ENCODE measurements at regions of chr10 and their contacts with region 1.

Region 1: GRCh38 chr10:110210674-110211464 is 3.5 kb downstream of the MXI1 start:
- DNase-seq: peak; percentile 95
- ATAC-seq: peak; percentile 90
- H3K4me3 ChIP-seq: peak overlapping the region; percentile 70 to 82
- H3K27ac ChIP-seq: peak overlapping the region; percentile 58; the same call in 1 of the 2 replicates
- H3K4me1 ChIP-seq: peaks cover 4% of the 10 kb centered on the region; the same call in 1 of the 2 replicates
- H3K27me3 ChIP-seq: peaks cover 2% of the 10 kb centered on the region; the same call in 1 of the 2 replicates
- CTCF ChIP-seq: no peak; the same call in 1 of the 2 replicates

Region 2: GRCh38 chr10:110074298-110074697 is 136.6 kb before region 1 on chr10:
- CTCF ChIA-PET with region 1: no interaction called
- POLR2A ChIA-PET with region 1: interaction called, 12 read pairs
- in situ Hi-C with region 1: no loop called
- intact Hi-C with region 1: no loop called
- DNase-seq: no peak
- ATAC-seq: no peak
- H3K4me3 ChIP-seq: no peak overlapping the region
- H3K27ac ChIP-seq: no peak overlapping the region
- H3K4me1 ChIP-seq: peaks cover 7% of the 10 kb centered on the region; the same call in 1 of the 2 replicates
- H3K27me3 ChIP-seq: no peaks in the 10 kb centered on the region
- CTCF ChIP-seq: no peak

Region 3: DNA sequence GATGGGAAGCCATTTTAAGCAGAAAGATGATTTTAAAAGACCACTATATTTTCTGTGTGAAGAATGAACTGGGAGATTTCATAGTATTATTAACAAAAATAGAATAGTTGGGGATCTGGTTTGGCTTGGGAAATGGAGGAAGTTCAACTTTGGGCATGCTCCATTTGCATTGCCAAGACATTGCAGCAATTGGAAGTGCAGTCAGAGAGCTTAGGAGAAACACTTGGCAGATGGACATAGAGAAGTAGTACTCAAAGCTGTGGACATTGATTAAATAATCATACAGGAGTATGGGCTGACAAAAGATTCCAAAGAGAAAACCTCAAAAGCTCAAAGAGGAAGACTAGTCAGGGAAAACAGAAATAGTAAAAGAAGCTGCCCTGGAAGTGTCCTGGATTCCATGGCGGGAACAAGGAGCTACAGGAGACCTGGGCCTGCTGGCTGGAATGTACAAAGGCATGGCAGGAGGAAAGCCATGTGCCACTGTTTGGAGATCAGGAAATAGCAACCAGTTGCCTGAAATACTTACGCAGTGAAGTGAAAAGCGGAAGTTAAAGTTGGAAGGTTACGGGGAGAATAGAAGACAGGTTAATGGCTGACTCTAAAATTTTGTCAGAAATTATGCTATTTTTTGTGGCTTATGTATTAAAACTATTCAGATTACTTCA is 97.1 kb before region 1 on chr10:
- CTCF ChIA-PET with region 1: no interaction called
- POLR2A ChIA-PET with region 1: no interaction called
- in situ Hi-C with region 1: no loop called
- intact Hi-C with region 1: no loop called
- DNase-seq: no peak
- ATAC-seq: no peak
- H3K4me3 ChIP-seq: no peak overlapping the region
- H3K27ac ChIP-seq: no peak overlapping the region
- H3K4me1 ChIP-seq: no peaks in the 10 kb centered on the region
- H3K27me3 ChIP-seq: no peaks in the 10 kb centered on the region
- CTCF ChIP-seq: no peak

Region 4: DNA sequence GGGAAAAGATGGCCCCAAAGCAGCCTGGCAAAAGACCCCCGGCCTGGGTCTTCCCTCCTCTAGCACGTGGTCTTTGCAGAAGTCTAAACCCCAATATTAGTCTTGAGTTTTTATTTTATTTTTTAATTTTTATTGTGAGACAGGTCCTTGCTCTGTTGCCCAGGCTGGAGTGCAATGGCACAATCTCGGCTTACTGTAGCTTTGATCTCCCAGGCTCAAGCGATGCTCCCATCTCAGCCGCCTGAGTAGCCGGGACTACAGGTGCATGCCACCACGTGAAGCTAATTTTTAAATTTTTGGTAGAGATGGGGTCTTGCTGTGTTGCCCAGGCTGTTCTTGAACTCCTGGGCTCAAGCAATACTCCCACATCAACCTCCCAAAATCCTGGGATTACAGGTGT is 43.7 kb before region 1 on chr10:
- CTCF ChIA-PET with region 1: no interaction called
- POLR2A ChIA-PET with region 1: interaction called, 12 read pairs
- in situ Hi-C with region 1: no loop called
- intact Hi-C with region 1: no loop called
- DNase-seq: no peak
- ATAC-seq: no peak
- H3K4me3 ChIP-seq: no peak overlapping the region
- H3K27ac ChIP-seq: no peak overlapping the region
- H3K4me1 ChIP-seq: no peaks in the 10 kb centered on the region
- H3K27me3 ChIP-seq: peaks cover 21% of the 10 kb centered on the region
- CTCF ChIP-seq: no peak

Region 5: GRCh38 chr10:110241407-110241806 is 30.5 kb after region 1 on chr10:
- CTCF ChIA-PET with region 1: no interaction called
- POLR2A ChIA-PET with region 1: no interaction called
- in situ Hi-C with region 1: no loop called
- intact Hi-C with region 1: no loop called
- DNase-seq: no peak
- ATAC-seq: no peak
- H3K4me3 ChIP-seq: no peak overlapping the region
- H3K27ac ChIP-seq: no peak overlapping the region
- H3K4me1 ChIP-seq: no peaks in the 10 kb centered on the region; the same call in 1 of the 2 replicates
- H3K27me3 ChIP-seq: no peaks in the 10 kb centered on the region
- CTCF ChIP-seq: no peak

Region 6: GRCh38 chr10:110497438-110498086 is 286.7 kb after region 1 on chr10 and contains the start of gene DUSP5:
- CTCF ChIA-PET with region 1: interaction called, 10 read pairs
- POLR2A ChIA-PET with region 1: no interaction called
- in situ Hi-C with region 1: no loop called
- intact Hi-C with region 1: no loop called
- DNase-seq: no peak
- ATAC-seq: peak; percentile 72
- H3K4me3 ChIP-seq: peak within 1 kb of the TSS; percentile 87 to 92
- H3K27ac ChIP-seq: peak within 1 kb of the TSS; percentile 94
- H3K4me1 ChIP-seq: peaks cover 48% of the 10 kb centered on the region
- H3K27me3 ChIP-seq: no peaks in the 10 kb centered on the region
- CTCF ChIP-seq: no peak
- total RNA-seq, gene DUSP5: 30.1 TPM